Sciatic nerve (tissue), 2 donors: ENCODE measurements at regions of chr3 and their contacts with region 1.

Region 1: GRCh38 chr3:49668414-49668797 is 5.7 kb upstream of the APEH start:
- DNase-seq: no peak
- ATAC-seq: no peak

Region 2: DNA sequence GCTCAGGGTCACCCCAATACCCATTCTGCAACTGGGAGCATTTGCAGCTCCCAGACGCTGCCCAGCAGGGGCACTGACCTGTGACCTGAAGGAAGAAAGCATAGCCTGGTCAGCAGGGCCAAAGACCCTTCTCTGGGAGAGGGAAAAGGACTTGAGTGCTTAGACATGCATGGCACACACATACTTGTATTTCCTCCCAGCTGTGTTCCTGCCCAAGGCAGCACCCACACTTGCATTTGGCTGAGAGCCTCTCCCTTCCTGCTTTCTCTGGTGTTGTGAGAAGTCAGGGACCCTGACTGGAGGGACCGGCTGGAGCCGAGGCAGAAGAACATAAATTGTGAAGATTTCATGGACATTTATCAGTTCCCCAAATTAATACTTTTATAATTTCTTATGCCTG is 528.3 kb before region 1 on chr3:
- intact Hi-C with region 1: loop called (anchors 2 kb)
- DNase-seq: no peak
- ATAC-seq: no peak

Region 3: GRCh38 chr3:49719214-49719884 is 50.9 kb after region 1 on chr3 and contains the start of gene AMIGO3:
- intact Hi-C with region 1: no loop called
- DNase-seq: peak; percentile 98
- ATAC-seq: peak; percentile 87
- total RNA-seq, gene AMIGO3: not detected